ENCODE measurements at regions of chr17 and their contacts with region 1.

Region 1: GRCh38 chr17:82698065-82698973 is at the start of gene RAB40B:
- DNase-seq: peak; percentile 99
- ATAC-seq: peak; percentile 99
- total RNA-seq, gene RAB40B: 20.7 TPM

Region 2: DNA sequence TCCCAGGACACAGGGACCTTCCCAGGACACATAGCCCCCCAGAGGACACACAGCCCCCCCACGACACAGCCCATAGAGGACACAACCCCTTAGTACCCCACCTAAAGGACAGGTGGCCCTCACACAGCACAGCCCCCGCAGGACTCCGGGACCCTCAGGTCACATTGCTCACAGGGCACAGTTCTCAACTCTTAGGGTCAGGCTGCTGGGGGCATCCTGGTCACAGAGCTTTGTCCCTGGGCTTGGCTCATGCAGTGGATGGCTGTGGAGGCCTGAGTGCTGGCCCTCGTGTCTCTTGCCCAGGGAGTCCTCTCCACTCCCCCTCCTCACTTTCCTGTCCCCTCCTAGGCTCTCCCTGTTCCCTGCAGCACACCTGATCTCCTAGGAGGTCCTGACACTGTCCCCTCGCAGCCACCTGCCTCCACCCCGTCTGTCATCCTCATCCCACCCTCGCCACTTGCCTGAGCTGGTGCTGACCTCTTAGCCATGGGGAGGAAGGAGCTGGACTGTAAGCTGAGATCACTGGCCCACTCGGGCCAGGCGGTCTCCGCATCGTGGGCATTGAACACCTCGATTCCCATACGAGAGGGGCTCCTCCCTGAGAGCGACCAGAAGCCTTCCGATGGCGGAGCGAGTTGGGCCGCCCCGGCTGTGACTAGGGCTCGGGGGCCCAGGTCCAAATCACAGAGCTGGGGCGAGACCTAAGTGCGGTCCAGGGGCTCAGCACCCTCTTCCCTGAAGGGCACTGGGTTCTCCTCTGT is 48.6 kb before region 1 on chr17:
- intact Hi-C with region 1: loop called (anchors 5 kb)
- DNase-seq: peak; percentile 45
- ATAC-seq: no peak

Measured in Right ventricle myocardium superior (tissue), 1 donor.